ENCODE measurements at regions of chr1 and their contacts with region 1.

Region 1: GRCh38 chr1:17059739-17060460 is 6.1 kb upstream of the SDHB start:
- DNase-seq: peak; percentile 65
- ATAC-seq: peak; percentile 97
- H3K4me3 ChIP-seq: peak overlapping the region in 1 of 5 experiments; percentile 20
- H3K4me3 Mint-ChIP-seq: peak overlapping the region; percentile 21
- H3K27ac ChIP-seq: no peak overlapping the region
- H3K27ac Mint-ChIP-seq: no peak overlapping the region
- H3K4me1 ChIP-seq: peaks cover 5 to 10% of the 10 kb centered on the region in 2 donors
- H3K4me1 Mint-ChIP-seq: peaks cover 15% of the 10 kb centered on the region
- H3K27me3 ChIP-seq: no peaks in the 10 kb centered on the region
- H3K27me3 Mint-ChIP-seq: peaks cover 6% of the 10 kb centered on the region
- CTCF ChIP-seq: peak; percentile 72

Region 2: DNA sequence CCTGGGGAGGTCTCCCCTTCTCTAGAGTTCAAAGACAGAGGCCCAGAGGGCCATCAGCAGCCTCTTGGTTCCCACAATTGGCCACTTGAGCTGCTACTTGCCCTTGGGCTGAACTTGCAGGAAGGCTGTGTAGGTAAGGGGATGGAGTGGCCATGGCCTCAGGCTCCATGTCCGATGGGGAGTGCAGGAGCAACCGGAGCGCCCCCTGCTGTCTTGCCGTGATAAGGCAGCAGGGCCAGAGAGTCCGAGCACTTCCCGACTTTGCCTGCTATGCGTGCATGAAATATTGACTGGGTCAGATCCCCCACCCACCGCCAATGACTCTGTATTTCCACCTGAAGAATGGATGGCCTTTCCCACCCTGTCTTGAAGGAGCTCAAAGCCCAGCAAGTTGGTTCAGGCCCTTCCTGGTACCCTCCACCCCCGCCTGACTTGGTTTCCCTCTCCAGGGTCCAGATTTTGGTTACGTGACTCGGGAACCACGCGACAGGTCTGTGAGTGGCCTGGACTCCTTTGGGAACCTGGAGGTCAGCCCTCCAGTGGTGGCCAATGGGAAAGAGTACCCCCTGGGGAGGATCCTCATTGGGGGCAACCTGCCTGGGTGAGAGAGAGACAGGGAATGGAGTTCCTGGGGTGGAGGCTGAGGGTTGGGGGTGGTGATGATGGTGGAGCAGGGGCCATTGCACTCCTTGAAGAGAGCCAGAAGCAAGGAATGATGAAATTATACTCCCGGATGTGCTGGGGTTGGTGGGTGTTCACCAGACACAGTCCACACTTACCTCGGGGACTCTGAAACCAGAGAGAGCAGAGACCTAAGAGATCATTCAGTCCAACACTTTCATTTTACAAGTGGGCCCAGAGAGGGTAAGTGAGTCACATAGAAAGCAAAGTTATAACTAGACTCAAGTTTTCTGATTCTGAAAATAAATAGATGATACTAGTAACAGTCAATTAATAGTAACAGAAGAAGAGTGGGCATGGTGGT is 214.6 kb after region 1 on chr1:
- CTCF ChIA-PET with region 1: interaction called, 10 read pairs
- POLR2A ChIA-PET with region 1: no interaction called
- intact Hi-C with region 1: no loop called
- DNase-seq: peak; percentile 25
- ATAC-seq: no peak
- H3K4me3 ChIP-seq: no peak overlapping the region
- H3K4me3 Mint-ChIP-seq: no peak overlapping the region
- H3K27ac ChIP-seq: no peak overlapping the region
- H3K27ac Mint-ChIP-seq: no peak overlapping the region
- H3K4me1 ChIP-seq: no peaks in the 10 kb centered on the region
- H3K4me1 Mint-ChIP-seq: no peaks in the 10 kb centered on the region
- H3K27me3 ChIP-seq: peaks cover 0 to 10% (median 0%) of the 10 kb centered on the region in 4 experiments
- H3K27me3 Mint-ChIP-seq: peaks cover 8% of the 10 kb centered on the region
- CTCF ChIP-seq: peak; percentile 40

Region 3: GRCh38 chr1:17335821-17336710 is 276.2 kb after region 1 on chr1:
- CTCF ChIA-PET with region 1: interaction called, 23 read pairs
- POLR2A ChIA-PET with region 1: no interaction called
- intact Hi-C with region 1: no loop called
- DNase-seq: peak; percentile 57
- ATAC-seq: peak; percentile 51
- H3K4me3 ChIP-seq: no peak overlapping the region
- H3K4me3 Mint-ChIP-seq: no peak overlapping the region
- H3K27ac ChIP-seq: no peak overlapping the region
- H3K27ac Mint-ChIP-seq: no peak overlapping the region
- H3K4me1 ChIP-seq: no peaks in the 10 kb centered on the region
- H3K4me1 Mint-ChIP-seq: no peaks in the 10 kb centered on the region
- H3K27me3 ChIP-seq: peaks cover 0 to 11% (median 0%) of the 10 kb centered on the region in 4 experiments
- H3K27me3 Mint-ChIP-seq: peaks cover 24% of the 10 kb centered on the region
- CTCF ChIP-seq: peak; percentile 93

Measured in B cell (primary cell).